Gastrocnemius medialis (tissue), 4 donors: ENCODE measurements at regions of chr2 and their contacts with region 1.

Region 1: DNA sequence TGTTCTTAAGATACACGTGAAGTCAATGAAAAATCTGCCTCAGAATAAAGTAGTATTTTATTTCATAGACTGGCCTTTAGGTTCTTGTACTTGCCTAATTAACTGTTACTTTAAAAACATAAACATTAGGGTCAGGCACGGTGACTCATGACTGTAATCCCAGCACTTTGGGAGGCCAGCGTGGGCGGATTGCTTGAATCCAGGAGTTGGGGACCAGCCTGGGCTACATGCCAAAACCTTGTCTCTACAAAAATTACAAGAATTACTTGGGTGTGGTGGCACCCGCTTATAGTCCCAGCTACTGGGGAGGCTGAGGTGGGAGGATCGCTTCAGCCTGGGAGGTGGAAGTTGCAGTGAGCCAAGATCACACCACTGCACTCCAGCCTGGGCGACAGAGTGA is 16.0 kb upstream of the SNORC start:
- DNase-seq: no peak
- ATAC-seq: no peak
- H3K4me3 ChIP-seq: no peak overlapping the region
- H3K27ac ChIP-seq: peak overlapping the region; percentile 70 to 85 (median 80)
- H3K4me1 ChIP-seq: peaks cover 22 to 43% of the 10 kb centered on the region in 2 donors
- H3K27me3 ChIP-seq: no peaks in the 10 kb centered on the region
- CTCF ChIP-seq: no peak
- POLR2A ChIP-seq: no peak

Region 2: DNA sequence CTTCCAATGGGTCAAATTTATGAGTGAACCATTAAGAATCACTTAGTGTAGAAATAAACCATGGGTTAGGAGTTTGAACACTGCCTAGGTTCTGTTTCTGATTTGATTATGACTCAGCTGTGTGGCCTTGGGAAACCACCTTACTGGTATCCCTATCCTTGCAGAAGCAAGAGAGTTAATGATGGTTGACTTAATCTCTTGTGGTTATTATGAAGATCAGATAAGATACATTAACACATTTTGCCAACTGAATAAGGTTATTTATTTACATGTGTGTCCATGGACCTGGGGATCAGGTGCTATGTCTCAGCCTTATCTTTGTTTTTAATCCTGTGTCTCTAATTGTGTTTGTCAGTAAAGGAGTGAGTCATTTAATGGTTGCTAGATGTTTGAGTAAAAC is 72.3 kb before region 1 on chr2:
- in situ Hi-C with region 1: no loop called
- intact Hi-C with region 1: no loop called
- DNase-seq: no peak
- ATAC-seq: no peak
- H3K4me3 ChIP-seq: no peak overlapping the region
- H3K27ac ChIP-seq: no peak overlapping the region
- H3K4me1 ChIP-seq: peaks cover 6 to 9% of the 10 kb centered on the region in 2 donors
- H3K27me3 ChIP-seq: no peaks in the 10 kb centered on the region
- CTCF ChIP-seq: no peak
- POLR2A ChIP-seq: no peak

Region 3: GRCh38 chr2:232876078-232876977 is 22.2 kb after region 1 on chr2:
- in situ Hi-C with region 1: no loop called
- intact Hi-C with region 1: loop called (anchors 2 kb)
- DNase-seq: no peak
- ATAC-seq: peak; percentile 12 to 38
- H3K4me3 ChIP-seq: peak overlapping the region; percentile 46 to 52 (median 50)
- H3K27ac ChIP-seq: peak overlapping the region in 1 of 4 donors; percentile 30
- H3K4me1 ChIP-seq: peaks cover 0 to 4% of the 10 kb centered on the region in 2 donors
- H3K27me3 ChIP-seq: no peaks in the 10 kb centered on the region
- CTCF ChIP-seq: peak in 3 of 5 experiments; percentile 11 to 24 (median 23)
- POLR2A ChIP-seq: no peak

Region 4: DNA sequence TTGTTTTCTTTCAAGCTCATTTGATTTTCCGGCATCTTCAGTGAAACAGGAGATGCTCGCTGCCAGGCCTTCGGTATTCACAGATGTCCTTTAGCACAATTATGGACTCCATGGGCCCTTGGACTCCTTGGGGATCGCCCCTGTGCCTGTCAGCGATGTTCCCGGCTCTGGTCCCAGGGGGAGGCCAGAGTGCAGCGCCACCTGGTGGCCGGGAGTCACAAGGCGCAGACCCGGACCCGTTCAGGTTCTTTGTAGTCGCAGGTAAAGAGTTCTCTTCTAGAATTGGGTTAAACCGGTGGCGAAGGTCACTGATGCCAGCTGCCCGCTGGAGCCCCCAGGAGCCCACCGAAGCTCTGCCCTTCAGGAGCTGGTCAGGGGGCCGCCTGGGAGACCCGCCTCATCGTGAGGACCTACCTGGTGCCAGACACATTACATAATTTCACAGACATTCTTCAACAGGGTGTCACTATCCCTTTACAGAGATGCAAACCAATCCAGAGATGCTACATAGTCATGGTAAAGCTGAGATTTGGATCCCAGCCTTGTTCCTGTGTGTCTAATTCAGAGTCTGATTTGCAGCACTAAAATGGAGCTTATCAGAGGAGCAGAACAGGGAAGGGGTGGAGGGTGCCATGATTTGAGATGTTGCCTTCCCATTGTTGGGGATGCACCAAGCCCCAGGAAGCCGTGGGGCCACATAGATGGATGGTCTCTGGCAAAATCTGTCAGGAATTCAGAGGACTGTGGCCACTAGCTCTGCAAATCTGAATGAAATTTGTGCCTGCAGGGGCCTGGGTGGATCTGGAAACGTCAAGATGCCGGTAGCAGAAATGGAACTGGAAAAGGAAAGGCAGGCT is 200.1 kb after region 1 on chr2:
- in situ Hi-C with region 1: no loop called
- intact Hi-C with region 1: loop called (anchors 1 kb)
- DNase-seq: peak in 1 of 2 donors; percentile 29
- ATAC-seq: no peak
- H3K4me3 ChIP-seq: no peak overlapping the region
- H3K27ac ChIP-seq: no peak overlapping the region
- H3K4me1 ChIP-seq: peaks cover 0 to 9% of the 10 kb centered on the region in 2 donors
- H3K27me3 ChIP-seq: no peaks in the 10 kb centered on the region
- CTCF ChIP-seq: peak; percentile 61 to 93 (median 86)
- POLR2A ChIP-seq: no peak

Region 5: GRCh38 chr2:233259730-233260129 is 405.6 kb after region 1 on chr2:
- in situ Hi-C with region 1: loop called in 2 of 4 experiments (anchors 5 to 10 kb)
- intact Hi-C with region 1: no loop called
- DNase-seq: no peak
- ATAC-seq: no peak
- H3K4me3 ChIP-seq: no peak overlapping the region
- H3K27ac ChIP-seq: no peak overlapping the region
- H3K4me1 ChIP-seq: no peaks in the 10 kb centered on the region
- H3K27me3 ChIP-seq: no peaks in the 10 kb centered on the region
- CTCF ChIP-seq: no peak
- POLR2A ChIP-seq: no peak